ENCODE measurements at regions of chr2 and their contacts with region 1.

Region 1: DNA sequence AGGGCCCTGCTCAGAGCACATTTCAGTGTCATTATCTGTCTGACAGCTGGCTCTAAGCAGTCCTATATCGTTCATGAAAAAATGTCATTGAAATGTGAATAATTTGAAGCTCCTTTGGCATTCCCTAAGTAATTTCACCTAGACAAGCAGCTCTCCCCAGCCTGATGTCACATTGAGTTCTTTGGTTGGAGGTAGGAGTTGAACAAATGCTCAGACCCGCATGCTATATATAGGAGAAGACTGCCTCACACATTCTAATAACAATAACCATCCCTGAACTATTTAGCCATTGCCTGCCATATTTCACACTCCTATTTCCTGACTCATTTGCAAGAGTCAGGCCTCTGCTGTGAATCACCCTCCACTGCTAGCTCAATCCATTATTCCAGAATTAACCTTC is 256.7 kb upstream of the ACVR2A start:
- DNase-seq: peak; percentile 64
- H3K4me3 ChIP-seq: no peak overlapping the region
- H3K27ac ChIP-seq: no peak overlapping the region
- H3K4me1 ChIP-seq: peaks cover 7% of the 10 kb centered on the region
- H3K27me3 ChIP-seq: no peaks in the 10 kb centered on the region
- CTCF ChIP-seq: no peak

Region 2: GRCh38 chr2:147525819-147526489 is 62.2 kb before region 1 on chr2:
- CTCF ChIA-PET with region 1: no interaction called
- dilution Hi-C with region 1: no loop called
- in situ Hi-C with region 1: no loop called
- intact Hi-C with region 1: loop called (anchors 1 kb)
- DNase-seq: peak; percentile 46
- H3K4me3 ChIP-seq: no peak overlapping the region
- H3K27ac ChIP-seq: no peak overlapping the region
- H3K4me1 ChIP-seq: peaks cover 20% of the 10 kb centered on the region
- H3K27me3 ChIP-seq: no peaks in the 10 kb centered on the region
- CTCF ChIP-seq: no peak

Region 3: GRCh38 chr2:147636238-147636882 is 48.2 kb after region 1 on chr2:
- CTCF ChIA-PET with region 1: no interaction called
- dilution Hi-C with region 1: no loop called
- in situ Hi-C with region 1: no loop called
- intact Hi-C with region 1: no loop called
- DNase-seq: peak; percentile 63
- H3K4me3 ChIP-seq: no peak overlapping the region
- H3K27ac ChIP-seq: no peak overlapping the region
- H3K4me1 ChIP-seq: peaks cover 7% of the 10 kb centered on the region
- H3K27me3 ChIP-seq: no peaks in the 10 kb centered on the region
- CTCF ChIP-seq: no peak

Region 4: DNA sequence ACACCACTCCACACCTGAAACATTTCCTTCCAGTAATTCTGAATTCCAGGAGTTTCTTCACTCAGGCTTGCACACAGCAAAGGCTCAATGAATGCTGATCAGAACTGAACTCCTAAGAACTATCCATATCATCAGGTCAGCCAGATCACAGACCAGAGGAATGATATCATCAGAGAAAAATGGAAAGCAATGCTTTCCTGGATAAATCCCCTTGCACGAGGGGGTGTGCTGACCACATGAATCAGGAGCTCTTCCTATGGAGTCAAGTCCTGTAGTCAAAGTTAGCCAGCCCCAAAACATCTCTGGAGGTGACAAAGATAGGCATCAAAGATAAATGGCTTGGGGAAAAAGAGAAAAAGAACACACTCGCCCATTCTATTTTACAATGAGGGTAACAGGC is 172.8 kb after region 1 on chr2:
- CTCF ChIA-PET with region 1: no interaction called
- dilution Hi-C with region 1: no loop called
- in situ Hi-C with region 1: no loop called
- intact Hi-C with region 1: no loop called
- DNase-seq: no peak
- H3K4me3 ChIP-seq: no peak overlapping the region
- H3K27ac ChIP-seq: no peak overlapping the region
- H3K4me1 ChIP-seq: no peaks in the 10 kb centered on the region
- H3K27me3 ChIP-seq: no peaks in the 10 kb centered on the region
- CTCF ChIP-seq: no peak